Endothelial cell of umbilical vein (primary cell): ENCODE measurements at regions of chr2 and their contacts with region 1.

Region 1: GRCh38 chr2:43877782-43878464 is 39.2 kb downstream of the ABCG8 start:
- DNase-seq: peak; percentile 59
- H3K4me3 ChIP-seq: no peak overlapping the region
- H3K27ac ChIP-seq: no peak overlapping the region
- H3K4me1 ChIP-seq: no peaks in the 10 kb centered on the region
- H3K27me3 ChIP-seq: peaks cover 0 to 2% of the 10 kb centered on the region in 2 experiments
- CTCF ChIP-seq: peak; percentile 87 to 89
- POLR2A ChIP-seq: no peak

Region 2: GRCh38 chr2:43898134-43898837 is 20.4 kb after region 1 on chr2:
- CTCF ChIA-PET with region 1: interaction called, 11 read pairs
- POLR2A ChIA-PET with region 1: no interaction called
- dilution Hi-C with region 1: no loop called
- intact Hi-C with region 1: no loop called
- DNase-seq: no peak
- H3K4me3 ChIP-seq: no peak overlapping the region
- H3K27ac ChIP-seq: no peak overlapping the region
- H3K4me1 ChIP-seq: no peaks in the 10 kb centered on the region
- H3K27me3 ChIP-seq: no peaks in the 10 kb centered on the region
- CTCF ChIP-seq: no peak
- POLR2A ChIP-seq: no peak